ENCODE measurements at regions of chr22 and their contacts with region 1.

Region 1: DNA sequence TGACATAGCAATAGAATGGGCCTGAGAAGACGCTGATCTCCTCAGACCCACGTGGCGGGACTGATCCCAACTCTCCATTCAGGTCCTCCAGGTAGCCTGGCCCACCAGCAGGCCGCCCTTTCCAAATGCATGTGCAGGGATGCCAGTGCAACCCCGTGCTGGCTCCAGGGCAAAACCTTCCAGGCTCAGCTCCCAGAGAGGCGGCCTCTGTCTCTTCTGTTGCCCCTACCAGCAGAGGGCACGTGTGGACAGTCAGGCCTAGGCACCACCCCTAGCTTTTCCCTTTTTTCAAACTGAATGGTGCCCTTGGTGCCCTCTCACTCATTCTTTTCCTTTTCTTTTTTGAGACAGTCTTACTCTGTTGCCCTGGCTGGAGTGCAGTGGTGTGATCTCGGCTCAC is 121.7 kb downstream of the OSBP2 start:
- DNase-seq: no peak
- H3K4me3 ChIP-seq: no peak overlapping the region
- CTCF ChIP-seq: no peak
- POLR2A ChIP-seq: no peak

Region 2: DNA sequence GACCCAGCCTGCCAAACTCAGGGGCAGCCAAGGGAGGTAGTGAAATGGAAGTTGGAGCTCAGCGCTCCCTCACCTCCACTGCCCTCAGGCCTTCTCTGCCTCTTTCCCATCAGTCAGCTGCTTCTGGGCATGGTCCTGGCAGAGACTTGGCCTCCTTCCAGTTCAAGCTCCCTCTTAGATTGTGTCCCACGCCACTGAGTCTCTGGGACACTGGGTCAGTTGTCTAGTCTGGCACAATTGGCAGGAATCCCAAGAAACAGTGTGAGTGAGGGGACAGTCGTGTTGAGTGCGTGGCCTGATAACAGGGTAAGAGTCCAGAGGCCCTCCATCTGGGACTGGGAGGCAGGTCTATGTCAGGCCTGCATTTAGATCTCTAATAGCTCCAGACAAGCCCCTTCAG is 187.9 kb before region 1 on chr22:
- intact Hi-C with region 1: no loop called
- DNase-seq: no peak
- H3K4me3 ChIP-seq: no peak overlapping the region
- CTCF ChIP-seq: no peak
- POLR2A ChIP-seq: no peak

Region 3: GRCh38 chr22:30728826-30729225 is 87.6 kb before region 1 on chr22:
- intact Hi-C with region 1: loop called (anchors 5 kb)
- DNase-seq: no peak
- H3K4me3 ChIP-seq: no peak overlapping the region
- CTCF ChIP-seq: no peak
- POLR2A ChIP-seq: no peak

Region 4: DNA sequence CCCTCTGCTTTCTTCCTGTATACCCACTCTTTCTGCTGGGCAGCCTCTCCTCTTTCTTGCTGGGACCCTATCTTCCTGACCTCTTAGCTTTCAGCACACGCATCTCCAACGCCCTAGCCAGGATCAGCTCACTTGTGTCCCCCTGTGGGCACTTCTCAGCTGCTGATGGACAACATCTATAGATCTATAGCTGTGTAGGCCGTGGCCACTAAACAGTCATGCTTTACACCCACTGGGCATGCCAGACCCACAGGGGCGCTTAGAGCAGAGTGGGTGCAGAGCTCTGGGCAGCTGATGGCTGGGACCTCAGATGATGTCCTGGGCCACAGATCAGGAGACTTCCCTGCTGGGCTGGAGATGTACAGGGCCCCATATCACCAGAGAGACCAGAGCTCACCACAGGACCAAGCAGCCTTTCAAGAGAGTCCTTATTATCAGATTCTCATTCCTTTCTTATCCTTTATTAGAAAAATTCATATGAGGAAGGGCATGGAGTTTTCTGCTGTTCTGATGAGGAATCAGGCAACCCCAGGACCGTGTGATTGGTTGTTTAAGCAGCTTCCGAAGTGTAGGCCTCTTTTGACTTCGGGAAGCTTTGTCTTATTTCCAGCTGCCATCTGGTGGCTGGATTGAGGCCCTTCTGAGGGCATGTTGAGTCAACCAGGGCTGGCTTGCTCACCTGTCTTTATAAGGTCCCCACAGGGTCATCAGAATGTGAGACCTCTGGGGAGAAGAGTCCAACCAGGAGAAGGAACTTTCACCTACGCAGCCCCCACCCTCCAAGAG is 61.2 kb before region 1 on chr22:
- intact Hi-C with region 1: no loop called
- DNase-seq: peak in 1 of 2 donors; percentile 33
- H3K4me3 ChIP-seq: no peak overlapping the region
- CTCF ChIP-seq: no peak
- POLR2A ChIP-seq: no peak

Measured in lower leg skin (tissue), 4 donors.